Left cardiac atrium (tissue), 4 donors: ENCODE measurements at regions of chr21 and their contacts with region 1.

Region 1: DNA sequence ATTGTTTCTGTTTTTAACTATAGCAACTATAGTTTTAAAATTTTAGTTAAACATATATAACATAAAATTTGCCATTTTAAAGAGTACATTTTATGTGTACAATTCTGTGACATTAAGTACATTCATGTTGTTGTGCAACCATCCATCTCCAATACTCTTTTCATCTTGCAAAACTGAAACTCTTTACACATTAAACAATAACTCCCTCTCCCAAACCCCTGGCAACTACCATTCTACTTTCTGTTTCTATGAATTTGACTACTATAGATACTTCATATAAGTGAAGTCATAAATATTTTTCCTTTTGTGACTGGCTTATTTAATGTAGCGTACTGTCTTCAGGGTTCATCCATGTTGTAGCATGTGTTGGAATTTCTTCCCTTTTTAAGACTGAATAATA is 25.9 kb downstream of the PCBP3 start:
- DNase-seq: no peak
- ATAC-seq: no peak

Region 2: GRCh38 chr21:45607021-45607908 is 62.1 kb before region 1 on chr21:
- intact Hi-C with region 1: loop called in 1 of 2 experiments (anchors 10 kb)
- DNase-seq: no peak
- ATAC-seq: no peak